ENCODE measurements at regions of chr17 and their contacts with region 1.

Region 1: GRCh38 chr17:39621523-39622379 is 5.0 kb upstream of the PPP1R1B start:
- DNase-seq: peak; percentile 92
- ATAC-seq: peak; percentile 77
- H3K4me3 Mint-ChIP-seq: peak overlapping the region; percentile 70
- H3K27ac Mint-ChIP-seq: peak overlapping the region; percentile 60
- H3K4me1 Mint-ChIP-seq: peaks cover 26% of the 10 kb centered on the region
- H3K27me3 Mint-ChIP-seq: peaks cover 16% of the 10 kb centered on the region
- CTCF ChIP-seq: peak; percentile 97

Region 2: DNA sequence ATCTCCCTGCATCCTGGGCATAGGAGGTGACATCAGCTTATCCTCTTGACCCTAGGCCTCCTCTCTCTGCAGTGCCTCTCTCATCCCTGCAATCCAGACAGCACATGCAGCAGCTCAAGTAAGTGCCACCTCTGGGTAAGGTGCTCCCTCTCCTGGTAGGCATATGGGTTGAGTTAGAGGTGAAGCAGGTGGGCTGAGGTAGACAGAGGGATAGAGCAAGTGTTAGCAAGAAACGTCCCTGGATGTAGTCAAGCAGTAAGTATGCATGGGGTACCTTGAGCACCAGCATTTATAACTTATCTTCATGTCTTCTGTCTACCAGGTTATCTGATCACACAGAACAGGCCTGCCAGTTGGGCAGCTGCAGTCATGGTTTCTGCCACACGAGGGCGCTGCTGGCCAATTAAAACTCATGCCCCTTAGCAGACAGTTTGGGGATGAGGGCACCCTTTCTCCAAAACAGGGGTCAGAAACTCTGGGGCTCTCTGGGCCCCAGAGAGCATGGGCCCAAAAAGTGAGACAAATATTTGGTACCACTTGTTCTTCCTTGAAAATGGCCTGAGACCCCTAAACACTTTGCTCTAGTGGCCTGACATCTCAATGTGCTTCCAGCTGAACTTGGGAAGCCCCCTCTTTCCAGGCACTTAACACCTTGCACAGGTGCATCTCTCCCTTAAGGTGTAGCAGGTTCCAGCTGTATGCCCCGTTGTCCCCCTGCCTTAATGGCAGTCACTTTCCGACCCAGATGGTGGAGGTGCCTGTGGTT is 73.9 kb before region 1 on chr17:
- CTCF ChIA-PET with region 1: interaction called, 124 read pairs
- POLR2A ChIA-PET with region 1: interaction called, 8 read pairs
- intact Hi-C with region 1: loop called (anchors 1 kb)
- DNase-seq: peak; percentile 74
- ATAC-seq: peak; percentile 65
- H3K4me3 Mint-ChIP-seq: no peak overlapping the region
- H3K27ac Mint-ChIP-seq: no peak overlapping the region
- H3K4me1 Mint-ChIP-seq: peaks cover 40% of the 10 kb centered on the region
- H3K27me3 Mint-ChIP-seq: no peaks in the 10 kb centered on the region
- CTCF ChIP-seq: peak; percentile 78

Region 3: GRCh38 chr17:39653662-39654331 is 32.0 kb after region 1 on chr17:
- CTCF ChIA-PET with region 1: interaction called, 16 read pairs
- POLR2A ChIA-PET with region 1: no interaction called
- intact Hi-C with region 1: no loop called
- DNase-seq: no peak
- ATAC-seq: peak; percentile 75
- H3K4me3 Mint-ChIP-seq: no peak overlapping the region
- H3K27ac Mint-ChIP-seq: no peak overlapping the region
- H3K4me1 Mint-ChIP-seq: peaks cover 33% of the 10 kb centered on the region
- H3K27me3 Mint-ChIP-seq: no peaks in the 10 kb centered on the region
- CTCF ChIP-seq: no peak

Region 4: GRCh38 chr17:39730095-39730921 is 108.6 kb after region 1 on chr17 and contains the start of gene MIEN1:
- CTCF ChIA-PET with region 1: interaction called, 29 read pairs
- POLR2A ChIA-PET with region 1: interaction called, 8 read pairs
- intact Hi-C with region 1: loop called (anchors 1 kb)
- DNase-seq: peak; percentile 99
- ATAC-seq: peak; percentile 91
- H3K4me3 Mint-ChIP-seq: peak within 1 kb of the TSS; percentile 88
- H3K27ac Mint-ChIP-seq: peak within 1 kb of the TSS; percentile 86
- H3K4me1 Mint-ChIP-seq: peaks cover 21% of the 10 kb centered on the region
- H3K27me3 Mint-ChIP-seq: no peaks in the 10 kb centered on the region
- CTCF ChIP-seq: peak; percentile 64
- total RNA-seq, gene MIEN1: 42.2 and 45.7 TPM in 2 replicates

Region 5: DNA sequence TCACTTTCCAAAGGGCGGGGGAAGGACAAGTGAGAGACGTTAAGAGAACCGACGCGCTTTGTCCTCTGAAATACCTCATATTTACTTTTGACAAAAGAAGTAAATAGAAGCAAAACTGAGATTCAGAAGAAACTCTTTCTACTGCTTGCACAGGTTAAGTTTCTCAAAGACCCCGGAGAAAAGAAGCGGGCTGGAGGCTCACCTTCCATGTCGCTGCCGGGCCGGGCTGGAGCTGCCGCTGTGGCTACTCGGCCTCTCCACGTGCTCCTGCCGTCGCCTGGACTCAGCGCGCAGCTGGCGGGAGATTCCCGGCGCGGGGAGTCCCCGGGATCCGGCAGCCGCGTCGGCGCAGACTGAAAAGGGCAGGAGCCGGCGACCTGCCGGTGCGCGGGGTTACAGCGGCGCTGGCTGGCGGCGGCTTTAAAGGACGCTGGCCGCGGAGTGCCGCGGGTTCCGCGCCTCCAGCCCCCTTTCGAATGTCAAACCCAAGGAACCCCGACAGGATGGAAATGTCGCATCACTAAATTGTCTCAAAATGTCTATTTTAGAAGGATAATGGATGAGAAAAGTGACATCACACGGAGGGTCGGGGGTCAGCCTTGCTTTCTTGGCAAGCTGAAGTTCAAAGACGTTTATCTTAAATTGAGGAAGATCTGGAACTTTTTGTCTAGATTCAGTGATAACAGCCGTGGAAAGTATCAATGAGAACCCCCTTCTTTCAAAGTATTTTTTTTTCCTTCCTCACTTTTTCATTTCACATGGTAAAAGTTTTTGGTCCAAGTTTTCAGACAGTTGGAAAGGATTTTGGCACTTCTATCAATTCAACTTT is 242.4 kb after region 1 on chr17 and contains the start of gene IKZF3:
- CTCF ChIA-PET with region 1: interaction called, 19 read pairs
- POLR2A ChIA-PET with region 1: interaction called, 7 read pairs
- intact Hi-C with region 1: loop called (anchors 1 kb)
- DNase-seq: peak; percentile 78
- ATAC-seq: peak; percentile 58
- H3K4me3 Mint-ChIP-seq: peak within 1 kb of the TSS; percentile 98
- H3K27ac Mint-ChIP-seq: peak within 1 kb of the TSS; percentile 99
- H3K4me1 Mint-ChIP-seq: peaks cover 71% of the 10 kb centered on the region
- H3K27me3 Mint-ChIP-seq: no peaks in the 10 kb centered on the region
- CTCF ChIP-seq: no peak
- total RNA-seq, gene IKZF3: 208 and 220 TPM in 2 replicates

Region 6: GRCh38 chr17:40026816-40027613 is 405.3 kb after region 1 on chr17:
- CTCF ChIA-PET with region 1: interaction called, 6 read pairs
- POLR2A ChIA-PET with region 1: no interaction called
- intact Hi-C with region 1: loop called (anchors 1 kb)
- DNase-seq: peak; percentile 62
- ATAC-seq: peak; percentile 92
- H3K4me3 Mint-ChIP-seq: no peak overlapping the region
- H3K27ac Mint-ChIP-seq: no peak overlapping the region
- H3K4me1 Mint-ChIP-seq: no peaks in the 10 kb centered on the region
- H3K27me3 Mint-ChIP-seq: no peaks in the 10 kb centered on the region
- CTCF ChIP-seq: no peak